ENCODE measurements at regions of chr3 and their contacts with region 1.

Region 1: DNA sequence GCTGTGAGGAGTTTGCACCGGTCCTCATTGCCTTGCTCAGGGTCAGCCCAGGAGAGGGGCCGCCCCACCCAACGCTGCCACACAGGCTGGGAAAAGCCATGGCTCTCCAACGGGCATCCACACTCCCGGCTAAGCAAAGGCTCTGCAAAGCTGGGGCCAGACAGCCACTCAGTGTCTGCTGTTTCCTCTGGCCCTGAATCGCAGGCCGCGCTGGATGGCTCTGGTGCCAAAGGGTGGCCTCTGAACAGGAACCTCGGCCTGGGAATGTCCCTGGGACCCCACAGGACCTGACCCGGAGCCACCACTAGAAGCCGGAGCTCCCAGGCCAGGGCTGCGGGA is 42.9 kb downstream of the RPN1 start:
- DNase-seq: no peak
- H3K4me3 ChIP-seq: no peak overlapping the region
- H3K27ac ChIP-seq: no peak overlapping the region
- H3K4me1 ChIP-seq: no peaks in the 10 kb centered on the region
- H3K27me3 ChIP-seq: no peaks in the 10 kb centered on the region
- CTCF ChIP-seq: no peak

Region 2: DNA sequence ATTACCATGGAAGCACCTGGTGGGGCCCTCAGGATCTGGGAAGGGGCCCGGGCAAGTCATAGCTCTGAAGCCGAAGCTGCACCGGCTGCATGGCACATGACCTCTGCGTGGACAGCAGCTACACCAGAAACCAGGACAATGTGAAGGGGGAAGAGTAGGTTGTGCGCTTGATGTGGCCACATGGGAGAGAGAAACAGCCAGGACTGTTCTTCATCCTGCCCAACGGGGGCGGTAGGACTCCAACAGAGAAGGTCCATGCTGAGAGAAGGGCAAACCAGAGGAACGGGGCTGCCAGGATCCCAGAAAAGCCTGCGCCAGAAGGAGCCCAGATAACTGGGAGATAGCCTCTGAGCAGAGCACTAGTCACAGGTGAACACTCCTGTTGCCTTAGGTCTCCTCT is 1264.9 kb before region 1 on chr3:
- CTCF ChIA-PET with region 1: no interaction called
- POLR2A ChIA-PET with region 1: no interaction called
- intact Hi-C with region 1: no loop called
- DNase-seq: no peak
- H3K4me3 ChIP-seq: no peak overlapping the region
- H3K27ac ChIP-seq: no peak overlapping the region
- H3K4me1 ChIP-seq: no peaks in the 10 kb centered on the region
- H3K27me3 ChIP-seq: peaks cover 36% of the 10 kb centered on the region
- CTCF ChIP-seq: no peak

Region 3: GRCh38 chr3:128011140-128011539 is 596.5 kb before region 1 on chr3:
- CTCF ChIA-PET with region 1: no interaction called
- POLR2A ChIA-PET with region 1: no interaction called
- intact Hi-C with region 1: loop called (anchors 5 kb)
- DNase-seq: peak; percentile 56 to 82
- H3K4me3 ChIP-seq: no peak overlapping the region
- H3K27ac ChIP-seq: no peak overlapping the region
- H3K4me1 ChIP-seq: no peaks in the 10 kb centered on the region; the same call in 1 of the 2 replicates
- H3K27me3 ChIP-seq: no peaks in the 10 kb centered on the region
- CTCF ChIP-seq: peak; percentile 58

Region 4: GRCh38 chr3:128095222-128095703 is 512.4 kb before region 1 on chr3:
- CTCF ChIA-PET with region 1: no interaction called
- POLR2A ChIA-PET with region 1: no interaction called
- intact Hi-C with region 1: loop called (anchors 1 kb)
- DNase-seq: peak; percentile 56 to 86
- H3K4me3 ChIP-seq: no peak overlapping the region
- H3K27ac ChIP-seq: no peak overlapping the region
- H3K4me1 ChIP-seq: no peaks in the 10 kb centered on the region
- H3K27me3 ChIP-seq: no peaks in the 10 kb centered on the region
- CTCF ChIP-seq: peak; percentile 76

Region 5: GRCh38 chr3:128559486-128560225 is 48.0 kb before region 1 on chr3:
- CTCF ChIA-PET with region 1: no interaction called
- POLR2A ChIA-PET with region 1: interaction called, 20 read pairs
- intact Hi-C with region 1: no loop called
- DNase-seq: peak; percentile 72 to 81
- H3K4me3 ChIP-seq: peak overlapping the region; percentile 9; the same call in 1 of the 2 replicates
- H3K27ac ChIP-seq: peak overlapping the region; percentile 49; the same call in 1 of the 2 replicates
- H3K4me1 ChIP-seq: peaks cover 13% of the 10 kb centered on the region
- H3K27me3 ChIP-seq: no peaks in the 10 kb centered on the region
- CTCF ChIP-seq: no peak

Region 6: GRCh38 chr3:128650096-128651050 is 42.7 kb after region 1 on chr3 and contains the start of gene RPN1:
- CTCF ChIA-PET with region 1: interaction called, 10 read pairs
- POLR2A ChIA-PET with region 1: interaction called, 12 read pairs
- intact Hi-C with region 1: no loop called
- DNase-seq: peak; percentile 90 to 98
- H3K4me3 ChIP-seq: peak within 1 kb of the TSS; percentile 98
- H3K27ac ChIP-seq: peak within 1 kb of the TSS; percentile 92
- H3K4me1 ChIP-seq: peaks cover 9% of the 10 kb centered on the region
- H3K27me3 ChIP-seq: no peaks in the 10 kb centered on the region
- CTCF ChIP-seq: no peak
- total RNA-seq, gene RPN1: 185 and 191 TPM in 2 replicates

Region 7: GRCh38 chr3:128845778-128846485 is 238.3 kb after region 1 on chr3:
- CTCF ChIA-PET with region 1: interaction called, 17 read pairs
- POLR2A ChIA-PET with region 1: no interaction called
- intact Hi-C with region 1: no loop called
- DNase-seq: peak; percentile 47 to 86
- H3K4me3 ChIP-seq: peak overlapping the region; percentile 27; the same call in 1 of the 2 replicates
- H3K27ac ChIP-seq: no peak overlapping the region
- H3K4me1 ChIP-seq: no peaks in the 10 kb centered on the region
- H3K27me3 ChIP-seq: no peaks in the 10 kb centered on the region
- CTCF ChIP-seq: peak; percentile 60

Region 8: GRCh38 chr3:128922804-128923459 is 315.3 kb after region 1 on chr3:
- CTCF ChIA-PET with region 1: no interaction called
- POLR2A ChIA-PET with region 1: no interaction called
- intact Hi-C with region 1: no loop called
- DNase-seq: no peak
- H3K4me3 ChIP-seq: no peak overlapping the region
- H3K27ac ChIP-seq: no peak overlapping the region
- H3K4me1 ChIP-seq: no peaks in the 10 kb centered on the region
- H3K27me3 ChIP-seq: no peaks in the 10 kb centered on the region
- CTCF ChIP-seq: no peak

Measured in PC-9 (cell line).